Activated T-helper 1 cell treated with anti-CD3 and anti-CD28 coated beads, Interleukin-12 subunit alpha, Interleukin-12 subunit beta, Interleukin-2, Interleukin-4 antibody, amounts not matched to agents 30 ng/mL and 10 ng/mL and 1 ng/mL, durations not matched to agents 14 hours and 24 hours and 36 hours (primary cell): ENCODE measurements at regions of chr4 and their contacts with region 1.

Region 1: GRCh38 chr4:3375688-3376087 is 66.1 kb upstream of the HGFAC start:
- DNase-seq: no peak
- H3K4me3 Mint-ChIP-seq: no peak overlapping the region
- H3K27ac Mint-ChIP-seq: no peak overlapping the region
- H3K4me1 Mint-ChIP-seq: peaks cover 8% of the 10 kb centered on the region
- H3K27me3 Mint-ChIP-seq: peaks cover 26% of the 10 kb centered on the region

Region 2: GRCh38 chr4:3328814-3329663 is 46.6 kb before region 1 on chr4:
- intact Hi-C with region 1: loop called (anchors 5 kb)
- DNase-seq: no peak
- H3K4me3 Mint-ChIP-seq: no peak overlapping the region
- H3K27ac Mint-ChIP-seq: no peak overlapping the region
- H3K4me1 Mint-ChIP-seq: no peaks in the 10 kb centered on the region
- H3K27me3 Mint-ChIP-seq: peaks cover 9% of the 10 kb centered on the region

Region 3: DNA sequence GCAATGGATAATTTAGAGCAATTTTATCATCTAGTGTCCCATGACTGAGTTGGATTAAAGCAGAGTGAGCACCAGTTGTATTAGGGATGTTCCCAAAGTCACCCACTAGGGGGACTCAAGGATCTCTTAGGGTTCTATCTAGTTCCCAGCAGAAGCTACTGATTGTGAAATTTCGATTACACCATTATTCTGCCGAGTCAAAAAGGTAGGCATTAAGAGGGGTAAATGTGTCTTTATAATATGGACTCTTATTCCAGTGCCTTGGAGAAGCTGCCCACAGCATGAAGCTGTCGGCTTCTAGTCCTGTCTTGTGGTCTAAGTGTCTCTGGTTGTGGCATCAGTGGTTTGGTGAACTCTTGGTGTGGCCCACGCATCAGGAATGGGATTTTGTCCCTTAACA is 29.5 kb before region 1 on chr4:
- intact Hi-C with region 1: no loop called
- DNase-seq: no peak
- H3K4me3 Mint-ChIP-seq: no peak overlapping the region
- H3K27ac Mint-ChIP-seq: no peak overlapping the region
- H3K4me1 Mint-ChIP-seq: peaks cover 4% of the 10 kb centered on the region
- H3K27me3 Mint-ChIP-seq: peaks cover 5% of the 10 kb centered on the region